SK-N-SH (cell line): ENCODE measurements at regions of chr17 and their contacts with region 1.

Region 1: GRCh38 chr17:3913531-3914311 is 2.5 kb downstream of the P2RX1 start:
- DNase-seq: peak; percentile 91
- H3K4me3 ChIP-seq: peak overlapping the region in 1 of 2 experiments; percentile 36; a peak in 1 of 4 replicates
- H3K27ac ChIP-seq: no peak overlapping the region
- H3K4me1 ChIP-seq: peaks cover 0 to 16% of the 10 kb centered on the region in 2 experiments; a peak in 1 of 4 replicates
- H3K27me3 ChIP-seq: no peaks in the 10 kb centered on the region
- CTCF ChIP-seq: peak; percentile 95
- EP300 ChIP-seq: no peak
- RAD21 ChIP-seq: peak; percentile 93

Region 2: GRCh38 chr17:3738562-3739295 is 175.0 kb before region 1 on chr17:
- CTCF ChIA-PET with region 1: interaction called, 11 read pairs
- POLR2A ChIA-PET with region 1: interaction called, 3 read pairs
- DNase-seq: no peak
- H3K4me3 ChIP-seq: no peak overlapping the region
- H3K27ac ChIP-seq: no peak overlapping the region
- H3K4me1 ChIP-seq: peaks cover 0 to 3% of the 10 kb centered on the region in 2 experiments; a peak in 1 of 4 replicates
- H3K27me3 ChIP-seq: no peaks in the 10 kb centered on the region
- CTCF ChIP-seq: no peak
- EP300 ChIP-seq: no peak
- RAD21 ChIP-seq: no peak

Region 3: GRCh38 chr17:3754458-3755334 is 159.0 kb before region 1 on chr17:
- CTCF ChIA-PET with region 1: no interaction called
- POLR2A ChIA-PET with region 1: no interaction called
- DNase-seq: peak; percentile 79
- H3K4me3 ChIP-seq: no peak overlapping the region
- H3K27ac ChIP-seq: no peak overlapping the region
- H3K4me1 ChIP-seq: no peaks in the 10 kb centered on the region; a peak in 1 of 4 replicates
- H3K27me3 ChIP-seq: no peaks in the 10 kb centered on the region; the same call in 1 of the 2 replicates
- CTCF ChIP-seq: no peak
- EP300 ChIP-seq: no peak
- RAD21 ChIP-seq: no peak

Region 4: DNA sequence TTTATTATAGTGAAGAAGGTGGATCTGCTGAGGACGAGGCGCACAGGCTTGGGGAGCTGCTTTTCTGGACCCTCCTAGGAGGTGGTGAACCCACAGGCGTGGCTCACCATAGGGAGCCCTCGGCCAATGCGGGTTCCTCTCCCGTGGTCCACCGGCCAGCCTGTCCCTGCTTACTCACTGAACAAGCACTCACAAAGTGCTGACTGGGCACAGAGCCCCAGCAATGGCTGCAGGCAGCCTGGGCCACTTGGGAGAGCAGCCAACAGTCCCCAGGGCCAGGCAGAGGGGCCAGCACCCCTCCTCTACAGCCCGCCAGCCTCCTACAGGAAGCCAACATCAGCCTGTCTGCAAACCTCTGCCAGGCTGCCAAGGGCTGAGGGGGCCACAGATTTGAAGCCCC is 48.5 kb before region 1 on chr17:
- CTCF ChIA-PET with region 1: interaction called, 41 read pairs
- POLR2A ChIA-PET with region 1: no interaction called
- DNase-seq: no peak
- H3K4me3 ChIP-seq: no peak overlapping the region
- H3K27ac ChIP-seq: no peak overlapping the region
- H3K4me1 ChIP-seq: no peaks in the 10 kb centered on the region; a peak in 1 of 4 replicates
- H3K27me3 ChIP-seq: no peaks in the 10 kb centered on the region
- CTCF ChIP-seq: no peak
- EP300 ChIP-seq: no peak
- RAD21 ChIP-seq: no peak

Region 5: GRCh38 chr17:3893003-3893719 is 20.6 kb before region 1 on chr17 and contains the start of gene CAMKK1:
- CTCF ChIA-PET with region 1: interaction called, 20 read pairs
- POLR2A ChIA-PET with region 1: no interaction called
- DNase-seq: peak; percentile 99
- H3K4me3 ChIP-seq: peak within 1 kb of the TSS; percentile 70 to 74
- H3K27ac ChIP-seq: peak within 1 kb of the TSS in 1 of 2 experiments; percentile 72; a peak in 1 of 4 replicates
- H3K4me1 ChIP-seq: peaks cover 9 to 39% of the 10 kb centered on the region in 2 experiments; a peak in 3 of 4 replicates
- H3K27me3 ChIP-seq: no peaks in the 10 kb centered on the region
- CTCF ChIP-seq: no peak
- EP300 ChIP-seq: no peak
- RAD21 ChIP-seq: no peak
- polyA plus RNA-seq, gene CAMKK1: 6.8 and 8.1 TPM in 2 replicates

Region 6: DNA sequence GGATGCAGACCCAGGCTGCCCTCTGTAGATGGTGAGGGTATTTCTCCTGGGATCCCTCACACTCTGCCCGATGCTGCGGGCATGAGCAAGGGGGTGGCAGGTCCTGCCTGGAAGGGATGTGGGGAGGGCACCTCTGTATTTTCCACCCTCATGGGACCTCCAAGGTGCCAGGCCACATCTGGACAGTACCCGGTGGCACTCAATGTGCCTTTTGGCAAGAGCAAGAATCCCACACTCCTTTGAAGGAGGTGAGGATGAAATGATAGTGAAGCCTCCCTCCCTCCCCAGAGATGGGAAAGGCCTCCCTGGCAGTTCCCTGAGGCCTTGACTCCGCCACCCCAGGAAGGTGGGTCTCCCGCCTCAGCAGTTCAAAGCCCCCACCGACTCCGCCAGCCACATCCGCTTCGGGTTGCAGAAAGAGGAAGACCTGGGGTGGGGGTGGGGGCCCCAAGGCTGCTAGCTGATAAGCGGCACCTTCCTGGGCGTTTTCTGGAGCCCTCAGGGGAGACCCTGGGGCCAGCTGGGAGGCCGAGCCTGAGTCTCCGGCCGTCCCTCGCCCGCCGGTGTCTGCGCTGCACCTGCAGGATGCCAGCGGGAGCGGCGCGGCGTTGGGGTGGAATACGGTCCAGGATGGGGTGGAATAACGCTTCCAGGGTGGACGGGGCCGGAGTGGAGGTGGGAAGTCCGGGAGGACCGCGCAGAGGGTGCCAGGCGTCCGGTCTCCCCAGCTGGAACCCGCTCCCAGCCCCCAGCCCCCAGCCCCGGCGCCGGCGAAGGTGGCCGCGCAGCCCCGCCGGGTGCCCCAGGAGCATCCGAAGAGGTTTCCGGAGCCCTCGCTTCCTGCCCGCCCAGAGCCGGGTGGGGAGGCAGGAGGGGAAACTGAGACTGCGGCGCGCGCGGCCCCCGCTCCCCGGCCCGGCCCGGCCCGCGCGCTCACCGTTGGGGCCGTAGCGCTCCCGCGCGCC is 49.8 kb after region 1 on chr17:
- CTCF ChIA-PET with region 1: interaction called, 12 read pairs
- POLR2A ChIA-PET with region 1: no interaction called
- DNase-seq: peak; percentile 54
- H3K4me3 ChIP-seq: peak overlapping the region in 1 of 2 experiments; percentile 46; a peak in 1 of 4 replicates
- H3K27ac ChIP-seq: no peak overlapping the region
- H3K4me1 ChIP-seq: peaks cover 0 to 3% of the 10 kb centered on the region in 2 experiments; a peak in 1 of 4 replicates
- H3K27me3 ChIP-seq: peaks cover 26% of the 10 kb centered on the region
- CTCF ChIP-seq: no peak
- EP300 ChIP-seq: no peak
- RAD21 ChIP-seq: no peak

Region 7: DNA sequence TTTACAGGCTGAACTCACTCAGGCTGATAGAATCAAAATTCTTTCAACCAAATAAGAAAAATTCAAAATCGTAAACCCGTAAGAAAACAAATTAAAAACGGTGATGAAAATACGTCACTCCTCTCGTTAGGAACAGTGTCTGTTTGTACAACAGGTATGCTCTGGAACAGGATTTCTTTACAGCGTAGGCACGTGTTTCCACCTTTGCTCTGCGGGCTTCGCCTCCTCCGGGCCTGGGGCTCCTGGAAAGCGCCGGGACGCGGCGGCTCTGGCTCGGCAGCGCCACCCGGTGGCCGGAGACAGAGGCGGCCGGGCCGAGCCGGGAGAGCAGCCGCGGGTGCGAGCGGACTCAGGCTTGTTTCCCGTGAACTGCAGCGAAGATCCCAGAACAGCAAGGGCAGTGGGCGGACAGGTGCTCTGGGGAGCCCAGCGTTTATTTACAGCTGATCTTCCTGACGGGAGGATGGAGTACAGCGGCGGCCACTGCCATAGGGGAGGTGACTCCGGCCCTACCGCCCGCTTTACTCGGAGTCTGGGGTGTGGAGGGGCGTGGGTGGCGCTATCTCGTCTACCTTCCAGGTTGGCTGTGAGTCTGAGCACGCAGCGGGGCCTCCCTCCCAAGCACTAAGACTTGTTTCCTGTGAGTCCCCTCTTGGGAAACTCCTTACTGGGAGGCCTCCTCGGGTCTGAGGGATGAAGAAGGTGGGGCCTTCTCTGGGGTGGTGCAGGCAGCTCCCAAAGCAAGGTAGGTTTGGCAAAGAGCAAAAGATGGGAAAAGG is 91.0 kb after region 1 on chr17:
- CTCF ChIA-PET with region 1: interaction called, 49 read pairs
- POLR2A ChIA-PET with region 1: no interaction called
- DNase-seq: peak; percentile 88
- H3K4me3 ChIP-seq: no peak overlapping the region
- H3K27ac ChIP-seq: no peak overlapping the region
- H3K4me1 ChIP-seq: peaks cover 0 to 2% of the 10 kb centered on the region in 2 experiments; a peak in 1 of 4 replicates
- H3K27me3 ChIP-seq: no peaks in the 10 kb centered on the region
- CTCF ChIP-seq: peak; percentile 68
- EP300 ChIP-seq: no peak
- RAD21 ChIP-seq: peak; percentile 67

Region 8: DNA sequence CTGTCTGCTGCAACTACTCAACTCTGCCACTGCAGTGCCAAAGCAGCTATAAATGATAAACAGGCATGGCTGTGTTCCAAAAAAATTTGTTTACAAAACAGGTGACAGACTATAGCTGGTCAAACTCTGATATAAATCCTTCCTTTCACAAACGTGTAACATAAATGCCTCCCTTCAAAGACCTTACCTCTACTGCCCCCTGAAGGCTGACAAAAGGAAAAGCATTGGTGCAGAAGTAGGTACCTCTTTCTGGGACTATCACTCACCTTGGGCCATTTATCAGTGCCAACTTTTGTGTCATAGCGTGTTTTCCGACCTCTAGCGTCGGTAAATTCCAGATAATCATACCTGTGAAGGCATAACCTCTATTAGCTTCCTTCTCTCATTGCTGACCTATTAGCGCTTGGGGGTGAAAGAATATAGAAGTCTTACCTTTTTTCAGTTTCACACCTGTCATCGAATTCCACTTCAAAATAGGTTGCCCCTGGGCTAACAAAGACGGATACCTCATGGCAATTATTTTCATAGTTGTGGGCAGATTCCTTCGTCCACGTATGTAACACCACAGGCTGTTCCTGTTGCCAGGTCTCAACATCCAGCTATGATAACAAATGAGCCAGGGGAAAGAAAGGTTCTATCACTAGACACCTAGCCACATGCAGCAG is 161.2 kb after region 1 on chr17:
- CTCF ChIA-PET with region 1: interaction called, 88 read pairs
- POLR2A ChIA-PET with region 1: no interaction called
- DNase-seq: peak; percentile 61
- H3K4me3 ChIP-seq: no peak overlapping the region; a peak in 1 of 4 replicates
- H3K27ac ChIP-seq: no peak overlapping the region
- H3K4me1 ChIP-seq: no peaks in the 10 kb centered on the region
- H3K27me3 ChIP-seq: no peaks in the 10 kb centered on the region
- CTCF ChIP-seq: peak; percentile 81
- EP300 ChIP-seq: no peak
- RAD21 ChIP-seq: peak; percentile 79